Posterior cingulate gyrus (tissue), 11 donors: ENCODE measurements at regions of chr9 and their contacts with region 1.

Region 1: DNA sequence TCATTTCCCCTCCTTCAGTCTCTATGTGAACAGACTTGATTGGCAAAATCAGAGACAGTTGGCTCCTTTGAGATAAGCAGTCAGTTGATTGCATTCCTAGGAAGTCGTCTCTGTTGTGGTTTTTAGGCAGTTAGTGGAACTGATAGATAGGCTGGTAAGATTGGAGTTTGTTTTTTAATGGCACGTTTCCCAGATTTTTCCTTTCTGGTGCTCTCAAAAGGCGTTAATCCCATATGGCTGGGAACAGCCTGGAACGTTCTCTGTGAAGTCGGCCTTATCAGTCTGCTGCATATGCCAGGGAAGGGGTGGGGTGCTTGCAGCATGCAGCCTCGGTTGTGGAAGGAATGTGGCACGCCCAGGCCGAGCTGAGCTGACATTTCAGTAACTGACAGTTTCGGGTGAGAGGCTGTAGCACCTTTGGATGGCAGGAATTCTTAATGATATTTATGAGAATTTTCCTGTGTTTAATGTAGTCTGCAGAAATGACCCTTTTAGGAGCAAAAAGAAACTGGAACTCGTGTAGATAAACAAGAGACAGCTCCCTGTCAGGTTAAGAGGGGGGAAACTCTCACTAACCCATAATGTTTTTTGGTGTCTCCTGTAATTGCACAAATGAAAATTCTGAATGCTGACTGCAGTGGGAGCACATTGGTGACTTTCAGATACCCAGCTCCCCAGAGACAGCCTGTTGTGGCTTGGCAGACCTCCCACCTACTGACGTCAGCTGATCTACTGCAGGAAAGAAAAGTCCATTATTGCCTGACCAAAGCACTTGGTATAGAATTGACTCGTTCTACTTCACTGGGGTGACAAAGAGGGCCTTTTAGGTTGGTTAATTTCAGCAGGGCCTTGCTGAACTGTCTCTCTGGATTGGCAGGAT is 6.3 kb downstream of the SPTAN1 start:
- DNase-seq: peak; percentile 72 to 97 (median 86)

Region 2: GRCh38 chr9:128607642-128608350 is 49.1 kb after region 1 on chr9:
- intact Hi-C with region 1: loop called (anchors 5 kb)
- DNase-seq: peak; percentile 56 to 97 (median 86)

Region 3: DNA sequence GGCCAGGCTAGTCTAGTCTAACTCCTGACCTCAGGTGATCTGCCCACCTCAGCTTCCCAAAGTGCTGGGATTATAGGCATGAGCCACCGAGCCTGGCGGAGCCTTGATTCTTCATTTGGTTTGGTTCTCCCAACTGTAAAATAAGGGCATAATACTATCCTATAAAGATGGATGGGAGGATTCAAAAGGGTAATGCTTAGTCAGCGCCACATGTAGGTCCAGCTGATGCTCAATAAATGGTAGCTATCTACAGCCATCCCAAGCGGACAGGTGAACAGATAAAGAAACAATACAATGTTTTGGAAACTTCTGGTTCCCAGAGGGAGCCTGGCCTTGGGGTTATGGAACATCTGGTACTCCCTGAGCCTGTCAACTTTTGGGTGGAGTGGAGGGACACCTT is 116.7 kb after region 1 on chr9:
- intact Hi-C with region 1: no loop called
- DNase-seq: peak in 3 of 10 donors; percentile 3 to 52 (median 13)